ENCODE measurements at regions of chr1 and their contacts with region 1.

Region 1: GRCh38 chr1:8525558-8526275 is 207.8 kb downstream of the SLC45A1 start:
- DNase-seq: peak; percentile 55 to 94 (median 64)
- ATAC-seq: peak; percentile 92
- H3K4me3 ChIP-seq: peak overlapping the region; percentile 65
- H3K4me3 Mint-ChIP-seq: no peak overlapping the region
- H3K27ac ChIP-seq: peak overlapping the region; percentile 92 to 93
- H3K27ac Mint-ChIP-seq: no peak overlapping the region
- H3K4me1 ChIP-seq: peaks cover 34% of the 10 kb centered on the region
- H3K4me1 Mint-ChIP-seq: peaks cover 27% of the 10 kb centered on the region
- H3K27me3 ChIP-seq: no peaks in the 10 kb centered on the region
- H3K27me3 Mint-ChIP-seq: no peaks in the 10 kb centered on the region
- CTCF ChIP-seq: no peak

Region 2: GRCh38 chr1:8409106-8409505 is 116.6 kb before region 1 on chr1:
- CTCF ChIA-PET with region 1: no interaction called
- POLR2A ChIA-PET with region 1: interaction called, 5 read pairs
- intact Hi-C with region 1: loop called in 1 of 2 experiments (anchors 5 kb)
- DNase-seq: peak in 3 of 14 experiments; percentile 49 to 72 (median 63)
- ATAC-seq: peak; percentile 79
- H3K4me3 ChIP-seq: no peak overlapping the region
- H3K4me3 Mint-ChIP-seq: peak overlapping the region; percentile 65
- H3K27ac ChIP-seq: peak overlapping the region; percentile 19 to 23
- H3K27ac Mint-ChIP-seq: peak overlapping the region; percentile 69
- H3K4me1 ChIP-seq: peaks cover 69% of the 10 kb centered on the region
- H3K4me1 Mint-ChIP-seq: peaks cover 76% of the 10 kb centered on the region
- H3K27me3 ChIP-seq: no peaks in the 10 kb centered on the region
- H3K27me3 Mint-ChIP-seq: no peaks in the 10 kb centered on the region
- CTCF ChIP-seq: peak; percentile 48

Region 3: GRCh38 chr1:8431019-8431418 is 94.7 kb before region 1 on chr1:
- CTCF ChIA-PET with region 1: interaction called, 3 read pairs
- POLR2A ChIA-PET with region 1: interaction called, 11 read pairs
- intact Hi-C with region 1: no loop called
- DNase-seq: peak in 12 of 14 experiments; percentile 22 to 74 (median 43)
- ATAC-seq: peak; percentile 87
- H3K4me3 ChIP-seq: no peak overlapping the region
- H3K4me3 Mint-ChIP-seq: peak overlapping the region; percentile 66
- H3K27ac ChIP-seq: peak overlapping the region; percentile 24 to 53
- H3K27ac Mint-ChIP-seq: peak overlapping the region; percentile 88
- H3K4me1 ChIP-seq: peaks cover 58% of the 10 kb centered on the region
- H3K4me1 Mint-ChIP-seq: peaks cover 68% of the 10 kb centered on the region
- H3K27me3 ChIP-seq: no peaks in the 10 kb centered on the region
- H3K27me3 Mint-ChIP-seq: no peaks in the 10 kb centered on the region
- CTCF ChIP-seq: peak; percentile 56

Region 4: GRCh38 chr1:8456308-8456912 is 69.3 kb before region 1 on chr1:
- CTCF ChIA-PET with region 1: no interaction called
- POLR2A ChIA-PET with region 1: no interaction called
- intact Hi-C with region 1: no loop called
- DNase-seq: no peak
- ATAC-seq: no peak
- H3K4me3 ChIP-seq: no peak overlapping the region
- H3K4me3 Mint-ChIP-seq: no peak overlapping the region
- H3K27ac ChIP-seq: no peak overlapping the region
- H3K27ac Mint-ChIP-seq: no peak overlapping the region
- H3K4me1 ChIP-seq: no peaks in the 10 kb centered on the region
- H3K4me1 Mint-ChIP-seq: peaks cover 40% of the 10 kb centered on the region
- H3K27me3 ChIP-seq: no peaks in the 10 kb centered on the region
- H3K27me3 Mint-ChIP-seq: no peaks in the 10 kb centered on the region
- CTCF ChIP-seq: no peak

Region 5: GRCh38 chr1:8510041-8510823 is 15.5 kb before region 1 on chr1:
- CTCF ChIA-PET with region 1: interaction called, 5 read pairs
- POLR2A ChIA-PET with region 1: interaction called, 40 read pairs
- intact Hi-C with region 1: loop called in 1 of 2 experiments (anchors 1 kb)
- DNase-seq: peak in 11 of 14 experiments; percentile 5 to 83 (median 44)
- ATAC-seq: peak; percentile 92
- H3K4me3 ChIP-seq: peak overlapping the region; percentile 19
- H3K4me3 Mint-ChIP-seq: peak overlapping the region; percentile 67
- H3K27ac ChIP-seq: peak overlapping the region; percentile 57 to 76
- H3K27ac Mint-ChIP-seq: peak overlapping the region; percentile 89
- H3K4me1 ChIP-seq: peaks cover 35% of the 10 kb centered on the region
- H3K4me1 Mint-ChIP-seq: peaks cover 53% of the 10 kb centered on the region
- H3K27me3 ChIP-seq: no peaks in the 10 kb centered on the region
- H3K27me3 Mint-ChIP-seq: no peaks in the 10 kb centered on the region
- CTCF ChIP-seq: no peak

Region 6: GRCh38 chr1:8878448-8879347 is 353.0 kb after region 1 on chr1 and contains the start of gene ENO1:
- CTCF ChIA-PET with region 1: no interaction called
- POLR2A ChIA-PET with region 1: interaction called, 22 read pairs
- intact Hi-C with region 1: no loop called
- DNase-seq: peak; percentile 97 to 100 (median 99)
- ATAC-seq: peak; percentile 82
- H3K4me3 ChIP-seq: peak within 1 kb of the TSS; percentile 90
- H3K4me3 Mint-ChIP-seq: peak within 1 kb of the TSS; percentile 98
- H3K27ac ChIP-seq: peak within 1 kb of the TSS; percentile 96 to 97
- H3K27ac Mint-ChIP-seq: peak within 1 kb of the TSS; percentile 92
- H3K4me1 ChIP-seq: peaks cover 53% of the 10 kb centered on the region
- H3K4me1 Mint-ChIP-seq: peaks cover 52% of the 10 kb centered on the region
- H3K27me3 ChIP-seq: no peaks in the 10 kb centered on the region
- H3K27me3 Mint-ChIP-seq: no peaks in the 10 kb centered on the region
- CTCF ChIP-seq: no peak
- total RNA-seq, gene ENO1: 120 to 129 TPM

Measured in CD4-positive, alpha-beta T cell (primary cell).